WTC11 (cell line): ENCODE measurements at regions of chr1 and their contacts with region 1.

Region 1: GRCh38 chr1:153192697-153193096 is 10.5 kb upstream of the LELP1 start:
- DNase-seq: peak; percentile 73
- ATAC-seq: peak; percentile 98
- H3K4me3 Mint-ChIP-seq: no peak overlapping the region
- H3K27ac Mint-ChIP-seq: no peak overlapping the region
- H3K4me1 Mint-ChIP-seq: peaks cover 7% of the 10 kb centered on the region
- H3K27me3 Mint-ChIP-seq: peaks cover 6% of the 10 kb centered on the region
- CTCF ChIP-seq: no peak

Region 2: DNA sequence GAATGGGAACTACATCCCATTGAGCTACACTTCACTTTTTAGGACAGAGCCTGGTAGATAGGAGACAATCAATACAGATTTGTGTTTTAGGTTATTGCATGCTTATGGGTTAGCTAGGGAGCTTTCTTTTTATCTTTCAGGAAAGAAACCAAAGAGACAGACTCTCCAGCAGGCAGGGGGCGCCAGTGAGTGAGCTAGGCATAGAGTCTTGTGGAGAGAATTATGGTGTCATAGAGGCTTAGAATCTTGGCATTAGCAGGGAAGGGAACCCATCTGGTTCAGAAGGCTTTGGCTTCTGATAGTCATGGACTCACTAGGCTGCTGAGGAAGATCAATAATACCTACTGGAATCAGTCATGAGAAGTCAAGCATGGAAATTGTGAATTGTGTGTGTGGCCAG is 314.7 kb before region 1 on chr1 and contains the start of gene SMCP:
- CTCF ChIA-PET with region 1: interaction called, 82 read pairs
- POLR2A ChIA-PET with region 1: no interaction called
- DNase-seq: peak; percentile 75
- ATAC-seq: no peak
- H3K4me3 Mint-ChIP-seq: no peak within 1 kb of the TSS
- H3K27ac Mint-ChIP-seq: no peak within 1 kb of the TSS
- H3K4me1 Mint-ChIP-seq: no peaks in the 10 kb centered on the region
- H3K27me3 Mint-ChIP-seq: no peaks in the 10 kb centered on the region; the same call in 1 of the 2 replicates
- CTCF ChIP-seq: peak; percentile 47
- total RNA-seq, gene SMCP: not detected in 3 replicates

Region 3: GRCh38 chr1:152926091-152926490 is 266.6 kb before region 1 on chr1:
- CTCF ChIA-PET with region 1: interaction called, 24 read pairs
- POLR2A ChIA-PET with region 1: no interaction called
- DNase-seq: no peak
- ATAC-seq: peak; percentile 34; the same call in 1 of the 2 replicates
- H3K4me3 Mint-ChIP-seq: no peak overlapping the region
- H3K27ac Mint-ChIP-seq: no peak overlapping the region
- H3K4me1 Mint-ChIP-seq: no peaks in the 10 kb centered on the region
- H3K27me3 Mint-ChIP-seq: no peaks in the 10 kb centered on the region
- CTCF ChIP-seq: no peak

Region 4: GRCh38 chr1:152968248-152968647 is 224.4 kb before region 1 on chr1:
- CTCF ChIA-PET with region 1: interaction called, 123 read pairs
- POLR2A ChIA-PET with region 1: no interaction called
- DNase-seq: no peak
- ATAC-seq: no peak
- H3K4me3 Mint-ChIP-seq: no peak overlapping the region
- H3K27ac Mint-ChIP-seq: no peak overlapping the region
- H3K4me1 Mint-ChIP-seq: no peaks in the 10 kb centered on the region
- H3K27me3 Mint-ChIP-seq: peaks cover 2% of the 10 kb centered on the region; the same call in 1 of the 2 replicates
- CTCF ChIP-seq: no peak

Region 5: DNA sequence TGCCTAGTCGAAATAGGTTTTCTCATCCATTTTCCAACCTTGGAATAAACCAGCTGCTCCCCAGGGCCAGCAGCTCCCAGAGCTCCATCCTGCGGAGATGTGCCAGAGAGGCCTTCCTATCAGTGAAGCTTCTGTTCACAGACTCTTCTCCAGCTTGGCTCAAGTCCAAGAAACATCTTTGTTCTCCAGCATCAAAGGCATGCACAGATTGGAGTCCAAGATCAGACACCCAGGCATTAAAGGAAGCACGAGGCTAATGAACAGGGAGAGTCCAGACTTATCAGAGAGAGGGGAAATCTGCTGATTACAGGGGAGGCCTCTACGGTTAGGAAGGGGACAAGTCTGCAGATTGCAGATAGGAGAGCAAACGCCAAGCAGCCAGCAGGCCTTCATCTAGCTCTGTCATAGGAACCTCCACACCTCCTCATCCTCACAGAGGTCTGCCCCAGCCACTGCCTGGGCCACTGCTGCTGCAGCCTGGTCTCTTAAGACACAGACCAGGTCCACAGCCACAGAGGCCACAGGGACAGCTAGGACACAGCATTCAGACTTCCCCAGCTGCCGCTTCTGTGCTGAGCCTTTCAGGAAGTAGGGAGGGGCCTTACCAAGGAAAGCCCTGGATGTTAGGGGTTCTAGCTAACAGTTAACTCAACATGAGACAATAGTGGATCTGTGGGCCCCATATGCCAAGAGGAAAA is 28.1 kb after region 1 on chr1:
- CTCF ChIA-PET with region 1: interaction called, 22 read pairs
- POLR2A ChIA-PET with region 1: no interaction called
- DNase-seq: no peak
- ATAC-seq: no peak
- H3K4me3 Mint-ChIP-seq: no peak overlapping the region
- H3K27ac Mint-ChIP-seq: no peak overlapping the region
- H3K4me1 Mint-ChIP-seq: no peaks in the 10 kb centered on the region
- H3K27me3 Mint-ChIP-seq: peaks cover 2% of the 10 kb centered on the region; the same call in 1 of the 2 replicates
- CTCF ChIP-seq: no peak

Region 6: DNA sequence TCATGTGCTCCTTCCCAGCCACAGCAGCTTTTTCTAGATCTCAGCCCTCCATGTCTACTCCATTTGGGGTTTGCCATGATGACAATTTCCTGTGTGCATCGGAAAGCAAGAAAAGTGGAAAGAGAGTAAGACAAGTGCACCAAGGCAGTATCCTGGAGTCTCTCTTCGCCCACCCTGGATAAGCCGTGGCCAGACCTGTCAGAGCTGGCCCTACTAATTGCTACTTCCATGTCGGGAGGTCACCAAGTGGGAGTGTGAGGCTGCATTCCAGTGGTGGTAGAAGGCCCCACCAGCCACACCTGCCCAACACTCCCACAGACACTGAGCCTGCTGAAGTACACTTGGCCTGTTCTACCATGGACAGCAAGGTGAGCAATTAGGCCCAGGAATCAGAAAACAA is 52.8 kb after region 1 on chr1:
- CTCF ChIA-PET with region 1: no interaction called
- POLR2A ChIA-PET with region 1: no interaction called
- DNase-seq: no peak
- ATAC-seq: no peak
- H3K4me3 Mint-ChIP-seq: no peak overlapping the region
- H3K27ac Mint-ChIP-seq: no peak overlapping the region
- H3K4me1 Mint-ChIP-seq: no peaks in the 10 kb centered on the region
- H3K27me3 Mint-ChIP-seq: peaks cover 12% of the 10 kb centered on the region
- CTCF ChIP-seq: no peak

Region 7: DNA sequence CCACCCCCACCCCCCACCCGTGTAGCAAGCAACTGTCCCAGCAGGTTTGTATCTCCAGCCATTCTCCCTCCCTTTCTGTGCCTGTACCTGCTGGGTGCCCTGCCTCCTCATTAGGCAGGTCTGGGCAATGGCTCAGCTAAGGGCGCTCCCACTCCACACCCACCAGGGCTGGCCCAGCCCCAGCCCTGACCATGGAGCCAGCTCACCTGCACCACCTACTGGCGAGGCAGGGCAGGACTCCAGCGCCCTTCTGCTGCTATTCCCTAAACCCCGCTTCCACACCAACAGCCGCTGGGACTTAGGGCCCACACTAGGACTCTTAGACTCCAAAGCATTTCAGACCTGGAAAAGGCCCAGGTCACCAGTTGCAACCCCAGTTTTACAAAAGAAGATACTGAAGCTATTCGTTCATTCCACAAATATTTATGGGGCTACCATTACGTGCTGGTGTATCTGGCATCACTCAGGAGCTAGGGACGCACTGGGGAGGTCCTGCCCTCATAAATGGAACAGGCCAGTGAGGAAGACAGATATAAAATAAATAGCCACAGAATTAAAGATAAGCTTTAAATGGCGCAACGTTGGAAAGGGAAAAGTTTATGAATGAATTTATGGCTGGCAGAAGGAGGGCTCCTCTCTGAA is 96.1 kb after region 1 on chr1:
- CTCF ChIA-PET with region 1: interaction called, 21 read pairs
- POLR2A ChIA-PET with region 1: no interaction called
- DNase-seq: peak; percentile 83
- ATAC-seq: peak; percentile 97
- H3K4me3 Mint-ChIP-seq: no peak overlapping the region
- H3K27ac Mint-ChIP-seq: no peak overlapping the region
- H3K4me1 Mint-ChIP-seq: peaks cover 16% of the 10 kb centered on the region
- H3K27me3 Mint-ChIP-seq: peaks cover under 1% of the 10 kb centered on the region; the same call in 1 of the 2 replicates
- CTCF ChIP-seq: peak; percentile 81